AG04450 (cell line): ENCODE measurements at regions of chr16 and their contacts with region 1.

Region 1: GRCh38 chr16:71883849-71884638 is at the start of gene ZNF821:
- DNase-seq: no peak
- H3K4me3 ChIP-seq: peak within 1 kb of the TSS; percentile 77
- H3K27ac ChIP-seq: peak within 1 kb of the TSS; percentile 59
- H3K27me3 ChIP-seq: no peaks in the 10 kb centered on the region
- CTCF ChIP-seq: no peak; the same call in 1 of the 2 replicates
- polyA plus RNA-seq, gene ZNF821: 6.3 and 6.5 TPM in 2 replicates

Region 2: DNA sequence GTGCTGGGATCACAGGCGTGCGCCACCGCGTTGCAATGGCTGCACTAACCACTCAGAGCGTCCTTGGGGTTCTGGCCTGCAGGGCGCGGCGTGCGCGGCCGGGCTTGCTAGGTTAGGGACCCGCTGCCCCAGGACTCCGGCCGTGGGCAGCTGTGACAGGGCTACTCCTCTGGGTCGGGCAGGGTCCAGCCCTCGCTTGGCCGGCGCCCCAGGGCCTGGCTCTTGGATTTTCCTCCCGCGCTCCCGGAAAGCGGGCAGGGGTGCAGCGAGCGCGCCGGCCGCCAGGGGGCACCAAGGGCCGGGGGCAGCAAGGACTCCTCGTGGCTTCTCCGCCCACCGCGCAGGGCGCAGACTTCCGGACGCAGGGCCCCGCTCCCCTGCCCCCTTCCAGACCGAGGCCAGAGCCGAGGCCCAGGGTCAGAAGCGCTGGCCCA is 442.7 kb before region 1 on chr16:
- CTCF ChIA-PET with region 1: no interaction called
- POLR2A ChIA-PET with region 1: no interaction called
- DNase-seq: no peak
- H3K4me3 ChIP-seq: no peak overlapping the region
- H3K27ac ChIP-seq: no peak overlapping the region
- H3K27me3 ChIP-seq: no peaks in the 10 kb centered on the region
- CTCF ChIP-seq: peak; percentile 24; the same call in 1 of the 2 replicates

Region 3: GRCh38 chr16:71808593-71809459 is 75.2 kb before region 1 on chr16 and contains the start of gene AP1G1:
- CTCF ChIA-PET with region 1: interaction called, 14 read pairs
- POLR2A ChIA-PET with region 1: no interaction called
- DNase-seq: peak; percentile 96
- H3K4me3 ChIP-seq: peak within 1 kb of the TSS; percentile 72
- H3K27ac ChIP-seq: peak within 1 kb of the TSS; percentile 98
- H3K27me3 ChIP-seq: no peaks in the 10 kb centered on the region
- CTCF ChIP-seq: no peak
- polyA plus RNA-seq, gene AP1G1: 85.8 and 90.6 TPM in 2 replicates

Region 4: DNA sequence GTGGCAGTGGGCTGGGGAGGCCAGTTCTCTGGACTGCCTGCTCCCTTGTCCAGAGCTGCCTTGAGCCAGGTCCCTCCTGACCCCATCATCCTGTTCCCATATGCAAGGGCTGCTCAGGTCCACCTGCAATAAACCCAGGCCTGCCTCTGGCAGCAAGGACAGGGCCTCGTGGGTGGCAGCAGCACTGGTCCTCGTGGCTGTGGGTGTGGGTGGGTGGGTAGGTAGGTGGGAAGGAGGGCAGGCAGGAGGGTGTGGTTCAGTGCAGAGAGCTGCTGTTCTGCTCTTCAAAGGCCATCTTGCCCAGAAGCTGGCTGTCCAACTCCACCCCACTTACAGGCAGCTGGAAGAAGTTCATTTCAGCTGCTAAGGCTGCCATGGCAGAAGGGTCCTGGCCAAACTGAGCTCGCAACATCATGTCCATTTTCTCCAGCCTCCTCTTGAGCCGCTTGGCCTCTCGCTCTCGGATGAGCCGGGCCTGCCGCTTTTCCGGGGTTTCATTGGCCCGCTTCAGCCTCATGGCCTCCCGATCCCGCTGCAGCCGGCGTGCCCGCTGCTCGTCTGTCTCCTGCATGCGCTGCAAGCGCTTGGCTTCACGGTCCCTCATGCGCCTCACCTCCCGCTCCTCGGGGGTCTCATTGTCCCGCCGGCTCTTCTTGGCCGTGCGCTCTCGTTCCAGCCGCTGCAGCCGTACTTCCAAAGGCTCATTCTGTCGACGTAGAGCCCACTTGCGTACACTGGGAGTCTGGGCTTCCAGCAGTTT is 24.1 kb before region 1 on chr16:
- CTCF ChIA-PET with region 1: interaction called, 24 read pairs
- POLR2A ChIA-PET with region 1: no interaction called
- DNase-seq: no peak
- H3K4me3 ChIP-seq: no peak overlapping the region
- H3K27ac ChIP-seq: no peak overlapping the region
- H3K27me3 ChIP-seq: no peaks in the 10 kb centered on the region
- CTCF ChIP-seq: no peak

Region 5: DNA sequence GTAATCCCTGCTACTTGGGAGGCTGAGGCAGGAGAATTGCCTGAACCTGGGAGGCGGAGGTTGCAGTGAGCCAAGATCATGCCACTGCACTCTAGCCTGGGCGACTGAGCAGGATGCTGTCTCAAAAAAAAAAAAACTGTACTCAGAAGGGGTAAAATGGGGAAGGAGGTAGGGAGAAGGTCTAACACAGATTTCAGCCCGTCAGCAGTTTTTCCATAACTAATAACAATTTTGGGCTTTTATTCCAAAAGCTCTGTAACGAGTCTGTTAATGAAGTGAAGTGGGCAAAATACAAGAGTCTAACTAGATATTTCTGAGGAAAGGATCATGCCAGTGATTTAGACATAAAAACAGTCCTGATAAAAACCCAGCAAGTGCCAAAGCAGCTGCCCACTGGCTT is 10.8 kb before region 1 on chr16:
- CTCF ChIA-PET with region 1: interaction called, 43 read pairs
- POLR2A ChIA-PET with region 1: no interaction called
- DNase-seq: no peak
- H3K4me3 ChIP-seq: no peak overlapping the region
- H3K27ac ChIP-seq: no peak overlapping the region
- H3K27me3 ChIP-seq: no peaks in the 10 kb centered on the region
- CTCF ChIP-seq: no peak

Region 6: DNA sequence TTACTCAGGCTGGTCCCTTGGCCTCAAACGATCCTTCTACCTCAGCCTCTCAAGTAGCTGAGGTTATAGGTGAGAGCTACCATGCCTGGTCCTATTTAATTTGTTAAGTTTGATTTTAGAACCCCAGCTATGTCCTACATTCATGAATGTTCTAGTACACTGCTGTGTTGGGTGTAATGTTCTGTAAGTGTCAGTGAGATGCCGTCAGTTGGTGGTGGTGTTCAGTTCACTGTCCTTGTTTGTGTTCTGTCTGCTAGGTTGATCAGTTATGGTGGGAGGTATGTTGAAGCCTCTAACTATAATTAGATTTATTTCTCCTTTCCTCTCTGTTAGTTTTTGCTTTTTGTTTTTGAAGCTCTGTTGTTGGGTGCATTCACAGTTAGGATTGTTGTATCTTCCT is 19.6 kb after region 1 on chr16:
- CTCF ChIA-PET with region 1: interaction called, 43 read pairs
- POLR2A ChIA-PET with region 1: interaction called, 8 read pairs
- DNase-seq: no peak
- H3K4me3 ChIP-seq: no peak overlapping the region
- H3K27ac ChIP-seq: no peak overlapping the region
- H3K27me3 ChIP-seq: no peaks in the 10 kb centered on the region
- CTCF ChIP-seq: no peak

Region 7: DNA sequence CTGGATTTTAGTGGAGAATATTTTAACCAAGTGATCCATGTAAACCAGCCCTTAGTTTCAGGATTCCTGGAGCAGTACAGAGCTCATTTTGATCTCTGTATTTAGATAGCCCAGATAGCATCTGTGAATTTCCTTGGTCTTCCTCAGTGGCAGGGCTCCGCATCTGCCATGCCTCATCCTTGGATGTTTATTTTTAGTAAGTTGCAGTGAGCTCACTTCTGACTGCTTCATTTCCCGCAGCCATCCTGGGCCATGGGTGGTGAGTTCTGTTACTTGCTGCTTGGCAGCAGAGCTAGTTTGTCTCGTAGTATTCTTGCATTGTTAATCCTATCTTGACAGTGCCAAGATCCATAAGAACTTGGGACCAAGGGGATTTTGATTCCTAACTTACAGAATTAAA is 45.0 kb after region 1 on chr16:
- CTCF ChIA-PET with region 1: interaction called, 32 read pairs
- POLR2A ChIA-PET with region 1: interaction called, 4 read pairs
- DNase-seq: peak; percentile 68
- H3K4me3 ChIP-seq: no peak overlapping the region
- H3K27ac ChIP-seq: no peak overlapping the region
- H3K27me3 ChIP-seq: no peaks in the 10 kb centered on the region
- CTCF ChIP-seq: no peak